ENCODE measurements at regions of chr19 and their contacts with region 1.

Region 1: GRCh38 chr19:4867534-4868285 is at the start of gene PLIN3:
- DNase-seq: peak; percentile 97
- H3K4me3 Mint-ChIP-seq: peak within 1 kb of the TSS; percentile 79
- H3K27ac Mint-ChIP-seq: peak within 1 kb of the TSS; percentile 69
- H3K4me1 Mint-ChIP-seq: peaks cover 22% of the 10 kb centered on the region
- H3K27me3 Mint-ChIP-seq: peaks cover 2% of the 10 kb centered on the region
- total RNA-seq, gene PLIN3: 36.6 to 37.7 TPM

Region 2: GRCh38 chr19:4851551-4852290 is 16.0 kb before region 1 on chr19:
- CTCF ChIA-PET with region 1: interaction called, 11 read pairs
- POLR2A ChIA-PET with region 1: no interaction called
- intact Hi-C with region 1: no loop called
- DNase-seq: peak; percentile 81
- H3K4me3 Mint-ChIP-seq: no peak overlapping the region
- H3K27ac Mint-ChIP-seq: peak overlapping the region; percentile 38
- H3K4me1 Mint-ChIP-seq: peaks cover 2% of the 10 kb centered on the region
- H3K27me3 Mint-ChIP-seq: no peaks in the 10 kb centered on the region

Region 3: GRCh38 chr19:4909897-4910593 is 42.3 kb after region 1 on chr19:
- CTCF ChIA-PET with region 1: interaction called, 102 read pairs
- POLR2A ChIA-PET with region 1: interaction called, 7 read pairs
- intact Hi-C with region 1: loop called (anchors 1 kb)
- DNase-seq: peak; percentile 97
- H3K4me3 Mint-ChIP-seq: peak overlapping the region; percentile 89
- H3K27ac Mint-ChIP-seq: peak overlapping the region; percentile 65
- H3K4me1 Mint-ChIP-seq: peaks cover 50% of the 10 kb centered on the region
- H3K27me3 Mint-ChIP-seq: no peaks in the 10 kb centered on the region

Region 4: GRCh38 chr19:4968462-4969291 is 101.0 kb after region 1 on chr19 and contains the start of gene KDM4B:
- CTCF ChIA-PET with region 1: interaction called, 6 read pairs
- POLR2A ChIA-PET with region 1: no interaction called
- intact Hi-C with region 1: loop called (anchors 2 kb)
- DNase-seq: peak; percentile 99
- H3K4me3 Mint-ChIP-seq: peak within 1 kb of the TSS; percentile 89
- H3K27ac Mint-ChIP-seq: peak within 1 kb of the TSS; percentile 79
- H3K4me1 Mint-ChIP-seq: peaks cover 31% of the 10 kb centered on the region
- H3K27me3 Mint-ChIP-seq: no peaks in the 10 kb centered on the region
- total RNA-seq, gene KDM4B: 19.2 to 20.6 TPM

Region 5: DNA sequence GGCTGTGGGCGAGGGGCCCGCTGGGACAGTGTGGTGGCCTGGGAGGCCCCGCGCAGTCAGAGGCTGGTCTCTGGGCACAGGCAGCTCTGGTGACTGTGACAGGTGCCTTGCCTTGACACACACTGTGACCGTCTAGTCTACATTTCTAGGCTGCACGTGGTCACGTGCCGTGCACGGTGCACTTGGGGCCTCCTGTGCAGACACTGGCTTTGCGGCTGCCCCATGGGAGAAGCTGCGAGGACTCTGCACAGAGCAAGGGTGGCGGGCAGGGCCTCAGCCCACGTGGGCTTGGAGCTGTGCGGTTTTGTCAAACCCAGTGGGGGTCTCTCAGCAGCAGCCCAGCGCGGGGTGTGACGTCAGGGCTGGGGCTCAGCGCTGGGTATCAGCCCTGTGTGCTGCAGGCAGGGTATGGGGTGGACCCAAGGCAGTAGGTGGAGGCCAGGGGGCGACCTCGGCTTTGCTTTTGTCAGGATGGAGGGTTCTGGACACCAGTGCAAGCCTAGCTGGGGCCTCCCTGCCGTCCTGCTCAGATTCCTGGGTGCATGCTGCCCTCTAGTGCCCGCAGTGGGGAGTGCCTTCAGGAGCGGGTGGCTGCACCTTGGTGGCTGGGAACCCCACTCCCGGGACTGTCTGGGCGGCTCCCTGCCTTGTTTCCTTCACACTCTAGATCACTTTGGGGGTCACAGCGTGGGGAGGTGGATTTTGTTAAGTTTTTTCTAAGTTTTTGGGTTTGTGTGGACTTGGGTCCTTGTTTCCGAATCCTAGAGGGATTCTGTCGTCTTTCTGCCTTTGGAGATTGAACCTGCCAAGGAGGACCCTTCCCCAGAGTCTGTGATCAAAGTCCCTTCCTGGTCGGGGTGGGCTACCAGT is 163.8 kb after region 1 on chr19:
- CTCF ChIA-PET with region 1: interaction called, 91 read pairs
- POLR2A ChIA-PET with region 1: no interaction called
- intact Hi-C with region 1: loop called (anchors 1 kb)
- DNase-seq: peak; percentile 88
- H3K4me3 Mint-ChIP-seq: no peak overlapping the region
- H3K27ac Mint-ChIP-seq: no peak overlapping the region
- H3K4me1 Mint-ChIP-seq: no peaks in the 10 kb centered on the region
- H3K27me3 Mint-ChIP-seq: no peaks in the 10 kb centered on the region